ENCODE measurements at regions of chr3 and their contacts with region 1.

Region 1: DNA sequence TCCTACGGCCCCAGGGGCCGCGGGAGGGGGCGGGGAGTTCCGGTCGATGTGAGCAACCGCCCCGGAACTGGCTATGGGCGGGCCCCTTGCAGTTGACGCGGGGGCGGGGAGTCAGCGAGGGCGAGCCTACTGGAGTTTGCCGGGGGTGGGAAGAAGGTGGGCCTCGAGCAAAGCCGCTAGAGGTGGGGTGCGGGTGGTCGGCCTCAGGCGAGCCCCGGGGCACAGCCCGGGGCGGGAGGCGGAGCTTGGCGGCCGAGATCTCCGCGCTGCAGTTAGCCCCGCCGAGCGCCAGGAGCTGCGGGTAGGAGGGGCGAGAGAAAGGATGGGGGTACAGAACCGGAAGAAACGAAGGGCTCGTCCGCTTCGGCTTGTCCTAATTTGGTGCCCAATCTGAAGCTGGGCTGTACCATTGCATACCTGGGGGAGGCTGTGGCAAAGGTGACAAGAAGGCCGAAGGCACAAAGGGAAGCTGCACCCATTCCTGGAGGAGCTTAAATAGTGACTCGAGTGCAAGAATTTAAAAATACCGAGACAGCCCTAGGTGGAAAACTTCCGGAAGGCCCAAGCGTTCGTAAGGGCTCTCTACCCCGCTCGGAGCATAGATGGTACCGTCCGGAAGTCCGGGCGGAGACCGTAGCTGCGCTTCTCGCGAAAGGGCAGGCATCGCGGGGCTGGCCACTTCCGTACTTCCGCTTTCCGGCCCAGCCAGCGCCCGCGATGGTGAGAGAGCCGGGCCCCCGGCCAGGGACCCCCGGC is at the starts of genes ARPC4 and TADA3:
- DNase-seq: peak; percentile 94
- H3K4me3 ChIP-seq: peak within 1 kb of the TSS; percentile 64 to 93 (median 92)
- H3K27ac ChIP-seq: peak within 1 kb of the TSS; percentile 91 to 98 (median 91)
- H3K4me1 ChIP-seq: peaks cover 12 to 25% of the 10 kb centered on the region in 2 donors
- H3K27me3 ChIP-seq: no peaks in the 10 kb centered on the region
- CTCF ChIP-seq: peak in 2 of 6 experiments; percentile 11 to 46
- POLR2A ChIP-seq: peak; percentile 12 to 66
- total RNA-seq, gene ARPC4: 155 to 232 (median 187) TPM
- total RNA-seq, gene TADA3: 64.2 to 93.3 (median 83.3) TPM

Region 2: GRCh38 chr3:9503283-9503682 is 289.3 kb before region 1 on chr3:
- intact Hi-C with region 1: no loop called
- DNase-seq: peak; percentile 79 to 84
- H3K4me3 ChIP-seq: no peak overlapping the region
- H3K27ac ChIP-seq: no peak overlapping the region
- H3K4me1 ChIP-seq: peaks cover 7 to 14% of the 10 kb centered on the region in 2 donors
- H3K27me3 ChIP-seq: no peaks in the 10 kb centered on the region
- CTCF ChIP-seq: peak; percentile 55 to 86 (median 80)
- POLR2A ChIP-seq: no peak

Region 3: GRCh38 chr3:9569054-9569453 is 223.5 kb before region 1 on chr3:
- intact Hi-C with region 1: no loop called
- DNase-seq: no peak
- H3K4me3 ChIP-seq: no peak overlapping the region
- H3K27ac ChIP-seq: no peak overlapping the region
- H3K4me1 ChIP-seq: no peaks in the 10 kb centered on the region
- H3K27me3 ChIP-seq: no peaks in the 10 kb centered on the region
- CTCF ChIP-seq: no peak
- POLR2A ChIP-seq: no peak

Region 4: GRCh38 chr3:9649791-9650521 is 142.6 kb before region 1 on chr3:
- intact Hi-C with region 1: loop called (anchors 10 kb)
- DNase-seq: no peak
- H3K4me3 ChIP-seq: peak overlapping the region; percentile 16 to 100 (median 99)
- H3K27ac ChIP-seq: peak overlapping the region; percentile 69 to 76 (median 71)
- H3K4me1 ChIP-seq: peaks cover 9 to 16% of the 10 kb centered on the region in 2 donors
- H3K27me3 ChIP-seq: no peaks in the 10 kb centered on the region
- CTCF ChIP-seq: no peak
- POLR2A ChIP-seq: no peak